ENCODE measurements at regions of chr7 and their contacts with region 1.

Region 1: GRCh38 chr7:36303202-36304098 is 86.2 kb upstream of the ANLN start:
- DNase-seq: peak; percentile 76 to 97
- H3K4me3 ChIP-seq: no peak overlapping the region
- H3K27ac ChIP-seq: peak overlapping the region; percentile 70 to 88
- H3K4me1 ChIP-seq: peaks cover 5 to 25% of the 10 kb centered on the region in 2 donors
- H3K27me3 ChIP-seq: no peaks in the 10 kb centered on the region
- CTCF ChIP-seq: no peak

Region 2: GRCh38 chr7:35906191-35906908 is 397.1 kb before region 1 on chr7:
- intact Hi-C with region 1: loop called (anchors 10 kb)
- DNase-seq: peak in 1 of 2 donors; percentile 75
- H3K4me3 ChIP-seq: no peak overlapping the region
- H3K27ac ChIP-seq: no peak overlapping the region
- H3K4me1 ChIP-seq: peaks cover 0 to 2% of the 10 kb centered on the region in 2 donors
- H3K27me3 ChIP-seq: no peaks in the 10 kb centered on the region
- CTCF ChIP-seq: peak; percentile 84 to 92 (median 86)

Region 3: GRCh38 chr7:36315309-36316133 is 12.1 kb after region 1 on chr7:
- intact Hi-C with region 1: loop called (anchors 2 kb)
- DNase-seq: no peak
- H3K4me3 ChIP-seq: no peak overlapping the region
- H3K27ac ChIP-seq: no peak overlapping the region
- H3K4me1 ChIP-seq: no peaks in the 10 kb centered on the region
- H3K27me3 ChIP-seq: no peaks in the 10 kb centered on the region
- CTCF ChIP-seq: no peak

Region 4: DNA sequence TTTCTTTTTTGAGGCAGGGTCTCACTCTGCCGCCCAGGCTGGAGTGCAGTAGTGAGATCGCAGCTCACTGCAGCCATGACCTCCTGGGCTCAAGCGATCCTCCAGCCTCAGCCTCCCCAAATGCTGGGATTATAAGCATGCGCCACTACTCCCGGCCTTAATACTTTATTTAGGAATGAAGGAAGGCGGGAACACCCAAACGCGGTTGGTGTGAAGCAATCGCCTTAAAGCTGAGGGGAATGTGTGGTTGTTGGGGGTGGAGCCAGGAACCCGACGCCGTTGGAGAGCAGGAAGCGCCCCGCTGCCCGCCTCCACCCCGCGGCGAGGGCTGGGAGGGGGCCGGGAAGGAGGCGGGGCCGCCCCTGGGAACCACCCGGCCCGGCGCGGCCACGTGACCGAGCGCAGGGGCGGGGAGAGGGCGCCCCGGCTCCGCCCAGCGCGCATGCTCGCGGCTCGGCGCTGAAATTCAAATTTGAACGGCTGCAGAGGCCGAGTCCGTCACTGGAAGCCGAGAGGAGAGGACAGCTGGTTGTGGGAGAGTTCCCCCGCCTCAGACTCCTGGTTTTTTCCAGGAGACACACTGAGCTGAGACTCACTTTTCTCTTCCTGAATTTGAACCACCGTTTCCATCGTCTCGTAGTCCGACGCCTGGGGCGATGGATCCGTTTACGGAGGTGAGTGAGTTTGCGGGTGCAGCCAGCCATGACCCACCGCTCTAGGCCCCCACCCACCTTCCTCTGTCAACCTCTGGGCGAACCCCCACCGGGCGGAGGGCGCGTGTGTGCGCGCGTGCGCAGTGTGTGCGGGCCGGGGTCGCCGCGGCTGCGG is 86.1 kb after region 1 on chr7 and contains the start of gene ANLN:
- intact Hi-C with region 1: loop called (anchors 1 kb)
- DNase-seq: peak; percentile 70 to 97
- H3K4me3 ChIP-seq: peak within 1 kb of the TSS; percentile 53 to 77
- H3K27ac ChIP-seq: peak within 1 kb of the TSS; percentile 83 to 87
- H3K4me1 ChIP-seq: peaks cover 0 to 10% of the 10 kb centered on the region in 2 donors
- H3K27me3 ChIP-seq: no peaks in the 10 kb centered on the region
- CTCF ChIP-seq: no peak
- total RNA-seq, gene ANLN: 1.8 TPM

Region 5: DNA sequence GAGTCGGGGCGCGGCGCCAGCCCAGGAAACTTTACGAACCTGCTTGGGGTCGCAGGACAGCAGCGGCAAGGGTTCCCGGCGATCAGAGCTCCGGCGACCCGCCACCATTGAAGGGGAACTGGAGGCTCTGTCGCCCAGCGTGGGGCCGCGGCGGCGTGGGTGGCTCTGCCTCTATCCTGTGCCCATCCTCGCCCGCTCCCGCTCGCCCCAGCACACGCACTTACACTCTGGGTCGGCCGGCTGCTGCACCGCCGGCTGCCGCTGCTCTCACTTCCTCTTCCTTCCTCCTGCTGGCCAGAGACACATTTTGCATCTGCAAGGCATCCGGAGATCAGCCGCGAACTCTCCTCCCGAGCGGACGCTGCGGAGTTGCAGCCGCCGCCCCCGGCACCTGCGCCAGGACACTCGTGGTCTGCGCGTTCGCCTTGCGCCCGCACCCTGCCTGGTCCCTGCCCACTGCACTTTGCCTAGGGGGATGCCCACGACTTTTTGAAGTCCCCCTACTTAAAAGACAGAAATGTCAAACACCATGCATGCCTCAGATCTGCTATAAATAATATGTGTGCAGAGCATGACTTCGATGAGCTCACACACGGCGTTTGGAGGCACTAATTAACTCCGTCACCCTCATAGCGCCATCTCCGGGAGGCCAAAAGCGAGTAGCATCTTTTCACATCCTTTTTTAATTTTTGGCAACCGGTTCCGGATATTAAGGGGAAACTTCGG is 1145.3 kb after region 1 on chr7 and contains the start of gene ELMO1:
- intact Hi-C with region 1: no loop called
- DNase-seq: peak; percentile 12 to 87
- H3K4me3 ChIP-seq: peak within 1 kb of the TSS; percentile 84 to 85
- H3K27ac ChIP-seq: peak within 1 kb of the TSS; percentile 75 to 85
- H3K4me1 ChIP-seq: peaks cover 0 to 3% of the 10 kb centered on the region in 2 donors
- H3K27me3 ChIP-seq: no peaks in the 10 kb centered on the region
- CTCF ChIP-seq: peak; percentile 30 to 46 (median 44)
- total RNA-seq, gene ELMO1: 40.8 TPM

Measured in ascending aorta (tissue), 2 donors.